ENCODE measurements at regions of chr9 and their contacts with region 1.

Region 1: GRCh38 chr9:126939821-126940221 is 25.2 kb downstream of the RALGPS1 start:
- DNase-seq: no peak
- ATAC-seq: peak; percentile 82

Region 2: GRCh38 chr9:127014216-127014615 is 74.4 kb after region 1 on chr9:
- intact Hi-C with region 1: no loop called
- DNase-seq: no peak
- ATAC-seq: no peak

Region 3: DNA sequence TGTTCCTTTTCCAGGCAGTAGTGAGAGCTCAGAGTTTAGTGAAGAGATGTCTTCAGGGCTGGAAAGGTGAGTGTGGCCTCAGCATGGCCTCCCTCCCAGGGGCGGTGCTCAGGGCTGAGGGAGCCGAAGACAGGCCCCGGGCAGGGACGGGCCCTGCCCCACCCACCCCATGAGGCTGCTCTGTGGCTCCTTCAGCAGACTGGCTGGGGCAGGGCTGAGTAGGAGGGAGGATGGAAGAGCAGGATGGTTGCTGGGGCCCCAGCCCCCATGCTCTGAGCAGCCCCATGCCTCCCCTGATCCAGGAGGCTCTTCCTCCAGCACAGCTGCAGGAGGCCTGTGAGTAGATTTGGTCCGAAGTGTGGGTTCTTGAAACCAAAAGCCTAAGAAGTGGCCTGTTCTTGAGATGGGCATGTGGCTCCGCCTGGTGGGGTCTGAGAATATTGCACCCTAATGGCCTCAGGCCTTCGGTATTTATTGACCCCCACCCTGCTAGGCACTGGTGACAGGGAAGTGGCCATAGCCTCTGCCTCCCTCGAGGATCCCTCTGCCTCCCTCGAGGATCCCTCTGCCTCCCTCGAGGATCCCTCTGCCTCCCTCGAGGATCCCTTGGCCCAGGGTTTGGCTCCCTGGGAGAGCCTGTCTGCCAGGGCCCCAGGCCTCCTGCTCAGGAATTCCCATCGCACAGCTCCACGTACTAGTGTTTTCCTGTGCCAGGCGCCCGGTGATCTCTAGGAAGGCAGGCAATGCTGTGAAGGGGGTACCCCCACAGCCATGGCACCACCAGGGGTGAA is 259.4 kb after region 1 on chr9:
- intact Hi-C with region 1: loop called (anchors 2 to 10 kb)
- DNase-seq: peak; percentile 60 to 83
- ATAC-seq: peak; percentile 84

Region 4: DNA sequence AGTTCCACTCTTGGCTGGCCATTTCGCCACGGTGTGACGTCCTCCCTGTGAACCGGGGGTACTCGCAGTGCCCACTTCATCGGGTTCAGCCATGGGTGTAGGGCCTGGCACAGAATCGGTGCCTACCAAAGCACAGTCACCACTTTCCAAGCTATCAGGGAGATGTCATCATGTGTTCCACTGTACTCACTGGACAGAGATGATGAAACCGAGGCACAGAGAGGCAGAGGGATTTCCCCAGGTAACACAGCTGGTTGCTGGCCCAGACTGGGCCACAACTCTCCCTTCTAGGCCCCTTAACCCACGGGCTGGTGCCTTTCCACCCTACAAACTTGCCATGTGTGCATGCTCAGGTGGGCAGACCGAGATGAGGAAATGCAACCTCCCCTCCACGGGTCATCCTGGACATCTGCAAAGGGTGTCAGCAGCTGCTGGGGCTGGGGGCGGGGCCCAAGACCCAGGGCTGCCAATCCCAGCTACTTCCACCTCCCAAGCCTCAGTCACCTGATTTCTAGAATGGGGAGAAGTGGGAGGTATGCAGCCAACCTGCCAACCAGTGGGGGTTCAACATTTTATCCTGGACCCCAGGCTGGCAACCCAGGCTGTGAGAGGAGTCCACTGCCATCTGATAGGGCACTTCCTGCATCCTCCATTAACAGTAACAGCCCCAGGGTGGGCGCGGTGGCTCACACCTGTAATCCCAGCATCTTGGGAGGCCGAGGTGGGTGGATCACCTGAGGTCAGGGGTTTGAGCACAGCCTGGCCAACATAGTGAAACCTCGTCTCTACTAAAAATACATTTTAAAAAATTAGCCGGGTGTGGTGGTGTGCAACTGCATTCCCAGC is 839.5 kb after region 1 on chr9:
- intact Hi-C with region 1: no loop called
- DNase-seq: peak; percentile 51 to 54
- ATAC-seq: peak; percentile 21